Adrenal gland (tissue), 19 donors: ENCODE measurements at regions of chr12 and their contacts with region 1.

Region 1: DNA sequence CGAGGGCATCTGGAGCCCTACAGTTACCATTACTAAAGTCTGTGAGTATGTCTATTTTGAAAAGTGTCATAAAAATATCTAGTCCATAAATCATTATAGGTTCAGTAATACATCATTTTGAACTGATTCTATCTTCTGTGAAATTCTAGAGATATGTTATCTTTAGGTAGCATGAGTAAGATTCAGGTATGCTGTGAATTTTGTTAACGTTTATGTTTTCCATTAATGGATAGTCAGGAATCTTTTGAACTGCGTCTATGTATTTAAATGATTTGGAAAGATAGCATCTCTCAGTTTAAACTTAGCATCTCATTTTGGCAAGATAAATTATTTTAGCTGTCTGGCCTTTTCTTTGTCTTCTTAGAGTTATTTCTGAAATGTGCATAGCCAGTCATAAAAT is 8.3 kb downstream of the ALG10B start:
- DNase-seq: no peak
- H3K4me3 ChIP-seq: no peak overlapping the region
- H3K27ac ChIP-seq: no peak overlapping the region
- H3K4me1 ChIP-seq: peaks cover 0 to 14% of the 10 kb centered on the region in 2 donors
- H3K27me3 ChIP-seq: no peaks in the 10 kb centered on the region
- CTCF ChIP-seq: no peak
- POLR2A ChIP-seq: no peak

Region 2: GRCh38 chr12:38911611-38912010 is 586.7 kb after region 1 on chr12:
- intact Hi-C with region 1: loop called in 1 of 2 experiments (anchors 10 kb)
- DNase-seq: no peak
- H3K4me3 ChIP-seq: no peak overlapping the region
- H3K27ac ChIP-seq: no peak overlapping the region
- H3K4me1 ChIP-seq: peaks cover 0 to 5% of the 10 kb centered on the region in 2 donors
- H3K27me3 ChIP-seq: no peaks in the 10 kb centered on the region
- CTCF ChIP-seq: no peak
- POLR2A ChIP-seq: no peak

Region 3: DNA sequence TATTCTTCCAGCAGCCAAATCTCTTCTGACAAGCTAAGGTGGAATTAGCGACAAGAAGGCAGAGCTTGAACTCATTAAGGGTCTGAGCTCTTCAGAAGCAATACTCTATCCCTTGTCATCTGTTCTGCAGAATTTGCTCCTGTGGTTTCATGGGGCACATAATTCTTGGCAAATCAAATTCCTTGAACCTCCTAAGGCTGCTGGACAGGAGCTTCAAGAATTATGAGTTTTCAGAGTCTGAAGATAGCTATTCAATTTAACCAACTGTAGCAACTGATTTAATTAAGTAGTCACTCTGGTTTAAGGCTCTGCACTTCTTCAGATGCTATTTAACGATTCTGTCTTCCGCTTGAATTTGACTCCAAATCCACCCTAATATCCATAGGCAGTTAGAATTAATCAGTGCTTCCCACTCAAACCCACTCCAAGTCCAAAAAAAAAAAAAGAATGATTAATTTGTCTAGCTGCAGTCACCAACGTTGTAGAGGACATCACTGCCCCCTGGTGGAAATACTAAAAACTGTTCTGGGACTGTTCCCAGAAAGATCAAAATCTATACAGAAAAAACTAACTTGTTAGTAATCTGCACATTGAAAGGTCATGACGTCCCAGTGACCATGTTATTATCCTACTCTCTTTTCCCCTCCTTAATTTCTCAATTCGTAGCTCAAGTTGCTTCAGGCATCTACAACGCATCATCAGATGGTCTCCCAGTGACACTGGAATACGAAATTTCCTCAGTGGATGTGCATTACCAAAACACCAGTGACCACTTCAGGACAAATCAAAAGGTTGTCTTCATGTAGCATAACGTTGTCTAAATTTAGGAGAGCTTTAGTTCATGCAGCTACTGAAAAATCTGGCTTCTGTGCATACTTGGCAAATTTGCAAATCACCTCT is 948.2 kb after region 1 on chr12:
- intact Hi-C with region 1: loop called in 1 of 2 experiments (anchors 10 kb)
- DNase-seq: peak in 5 of 7 donors; percentile 24 to 45 (median 37)
- H3K4me3 ChIP-seq: no peak overlapping the region
- H3K27ac ChIP-seq: no peak overlapping the region
- H3K4me1 ChIP-seq: no peaks in the 10 kb centered on the region
- H3K27me3 ChIP-seq: no peaks in the 10 kb centered on the region
- CTCF ChIP-seq: peak in 5 of 6 experiments; percentile 36 to 84 (median 57)
- POLR2A ChIP-seq: no peak